CD14-positive monocyte (primary cell): ENCODE measurements at regions of chr19 and their contacts with region 1.

Region 1: GRCh38 chr19:41785653-41786052 is 10.7 kb upstream of the CEACAM3 start:
- DNase-seq: peak; percentile 82 to 91 (median 85)
- H3K4me3 ChIP-seq: peak overlapping the region in 1 of 3 experiments; percentile 45
- H3K4me3 Mint-ChIP-seq: peak overlapping the region; percentile 47 to 79
- H3K27ac ChIP-seq: peak overlapping the region in 1 of 2 donors; percentile 20
- H3K27ac Mint-ChIP-seq: peak overlapping the region; percentile 22 to 81 (median 64)
- H3K4me1 ChIP-seq: peaks cover 34 to 41% of the 10 kb centered on the region in 2 donors
- H3K4me1 Mint-ChIP-seq: peaks cover 38% of the 10 kb centered on the region
- H3K27me3 ChIP-seq: no peaks in the 10 kb centered on the region
- H3K27me3 Mint-ChIP-seq: peaks cover 0 to 11% (median 7%) of the 10 kb centered on the region in 3 donors
- CTCF ChIP-seq: peak; percentile 94

Region 2: GRCh38 chr19:41740415-41741243 is 45.0 kb before region 1 on chr19:
- intact Hi-C with region 1: no loop called
- DNase-seq: no peak
- H3K4me3 ChIP-seq: no peak overlapping the region
- H3K4me3 Mint-ChIP-seq: no peak overlapping the region
- H3K27ac ChIP-seq: no peak overlapping the region
- H3K27ac Mint-ChIP-seq: no peak overlapping the region
- H3K4me1 ChIP-seq: peaks cover 28 to 29% of the 10 kb centered on the region in 2 donors
- H3K4me1 Mint-ChIP-seq: peaks cover 31% of the 10 kb centered on the region
- H3K27me3 ChIP-seq: no peaks in the 10 kb centered on the region
- H3K27me3 Mint-ChIP-seq: peaks cover 0 to 2% (median 0%) of the 10 kb centered on the region in 3 donors
- CTCF ChIP-seq: no peak

Region 3: DNA sequence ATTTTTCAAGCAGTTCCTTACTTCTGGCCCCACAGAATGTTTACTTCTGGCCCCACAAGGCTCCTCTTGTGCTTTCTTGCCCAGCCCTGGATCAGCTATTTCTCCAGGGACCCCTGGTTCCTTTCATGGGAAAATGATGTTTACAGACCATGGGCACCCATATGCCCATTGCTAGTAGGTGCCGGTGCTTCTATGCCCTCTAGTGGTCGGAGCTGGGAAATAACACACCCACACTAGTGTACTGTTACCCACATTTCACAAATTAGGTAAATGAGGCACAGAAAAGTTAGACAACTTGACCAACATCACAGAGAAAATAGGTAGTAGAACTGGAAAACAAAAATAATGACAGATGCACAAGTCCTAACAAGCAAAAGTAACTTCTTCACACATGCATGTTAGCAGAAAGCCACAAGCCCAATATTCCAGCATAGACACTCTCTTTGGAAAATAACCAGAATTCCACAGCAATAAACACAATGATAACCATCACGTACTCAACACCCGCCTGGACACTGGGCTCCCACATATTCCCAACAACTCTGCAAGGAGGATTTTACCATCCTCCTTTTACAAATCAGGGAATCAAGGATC is 31.6 kb before region 1 on chr19:
- intact Hi-C with region 1: loop called in 1 of 2 experiments (anchors 5 kb)
- DNase-seq: peak; percentile 46 to 63 (median 61)
- H3K4me3 ChIP-seq: no peak overlapping the region
- H3K4me3 Mint-ChIP-seq: no peak overlapping the region
- H3K27ac ChIP-seq: no peak overlapping the region
- H3K27ac Mint-ChIP-seq: no peak overlapping the region
- H3K4me1 ChIP-seq: peaks cover 4 to 6% of the 10 kb centered on the region in 2 donors
- H3K4me1 Mint-ChIP-seq: peaks cover 22% of the 10 kb centered on the region
- H3K27me3 ChIP-seq: no peaks in the 10 kb centered on the region
- H3K27me3 Mint-ChIP-seq: peaks cover 0 to 7% (median 0%) of the 10 kb centered on the region in 3 donors
- CTCF ChIP-seq: peak; percentile 65